Mammary epithelial cell (primary cell): ENCODE measurements at regions of chrX and their contacts with region 1.

Region 1: DNA sequence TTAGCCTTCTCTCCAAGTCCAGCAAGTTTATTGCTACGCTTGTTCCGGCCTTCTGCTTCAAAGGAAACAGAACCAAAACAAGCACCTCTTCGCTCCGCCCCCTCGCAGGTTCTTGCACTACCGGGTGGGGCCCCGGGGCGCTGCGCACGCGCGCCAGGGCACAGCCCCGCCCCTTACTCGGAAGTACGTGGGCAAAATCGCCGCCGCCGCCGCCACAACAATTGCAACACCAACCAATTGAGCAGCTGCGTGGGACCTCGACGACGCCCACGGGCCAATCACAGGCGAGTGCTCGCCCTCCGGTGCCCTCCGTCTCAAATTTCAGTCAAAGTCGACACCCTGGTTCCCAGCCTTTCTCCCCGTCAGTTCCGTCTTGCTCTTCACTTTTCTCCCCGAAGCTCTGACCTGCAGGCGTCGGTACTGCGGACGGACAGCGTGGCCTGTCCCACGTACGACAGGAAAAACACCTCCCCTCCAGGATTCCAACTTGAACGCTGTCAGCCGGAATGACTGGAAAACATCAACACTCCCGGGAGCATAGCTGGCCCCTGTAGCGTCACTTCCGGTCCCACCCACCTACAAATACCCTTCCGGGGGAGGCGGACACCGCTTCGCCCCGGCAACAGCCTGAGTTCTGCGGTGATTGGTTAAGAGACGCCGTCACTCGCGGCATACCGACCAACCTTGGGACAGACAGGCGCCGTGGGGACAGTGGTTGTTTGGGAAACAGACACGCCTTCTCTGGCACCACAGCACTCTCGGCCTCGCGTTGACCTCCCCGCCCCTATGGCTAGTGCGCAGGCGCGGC is 624 bp upstream of the OTUD5 start:
- DNase-seq: peak; percentile 95
- H3K4me3 ChIP-seq: peak overlapping the region; percentile 67 to 75 (median 74)
- H3K27ac ChIP-seq: peak overlapping the region; percentile 97
- H3K4me1 ChIP-seq: no peaks in the 10 kb centered on the region
- H3K27me3 ChIP-seq: no peaks in the 10 kb centered on the region
- CTCF ChIP-seq: no peak

Region 2: DNA sequence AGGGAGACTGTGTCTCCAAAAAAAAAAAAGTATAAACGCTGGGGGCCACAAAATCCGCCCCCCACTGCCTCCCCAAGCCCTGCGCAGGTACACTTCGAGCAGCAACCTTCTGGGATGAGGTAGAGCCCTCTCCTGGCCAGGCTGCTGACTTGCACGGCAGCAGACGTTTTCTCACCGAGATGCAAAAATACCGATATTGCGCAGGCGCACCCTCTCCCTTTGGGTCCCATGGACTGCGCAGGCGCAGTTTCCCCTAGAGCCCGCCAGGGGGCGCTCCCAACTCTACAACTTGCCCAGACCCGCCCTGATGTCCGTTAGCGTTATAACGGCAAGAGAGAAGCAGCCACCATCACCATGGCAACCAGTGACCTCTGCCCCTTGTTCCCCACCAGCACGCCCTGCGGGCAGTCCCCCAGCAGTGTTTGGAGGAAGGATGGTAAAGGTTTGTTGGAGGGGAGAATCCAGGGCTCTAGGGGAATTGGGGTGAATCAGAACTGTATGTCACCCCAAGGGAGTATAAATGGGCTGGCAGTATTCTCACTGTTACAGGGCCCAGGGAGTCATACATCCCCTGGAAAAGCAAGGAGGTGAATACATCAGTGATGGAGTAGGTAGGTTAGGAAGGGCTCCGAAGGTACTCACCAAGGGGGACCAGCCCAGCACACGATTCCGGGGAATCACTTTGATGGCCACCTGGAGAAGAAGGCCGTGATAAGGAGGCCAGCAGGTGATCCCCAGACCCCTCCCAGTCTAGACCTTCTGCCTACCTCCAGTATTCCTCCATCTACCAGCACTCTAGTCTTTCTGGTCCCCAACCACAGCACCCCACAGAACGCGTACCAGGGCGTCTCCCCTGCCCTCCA is 40.7 kb before region 1 on chrX:
- CTCF ChIA-PET with region 1: no interaction called
- dilution Hi-C with region 1: no loop called
- in situ Hi-C with region 1: no loop called
- intact Hi-C with region 1: loop called (anchors 5 kb)
- DNase-seq: peak; percentile 82
- H3K4me3 ChIP-seq: peak overlapping the region; percentile 8 to 70 (median 66)
- H3K27ac ChIP-seq: peak overlapping the region; percentile 56
- H3K4me1 ChIP-seq: peaks cover 5% of the 10 kb centered on the region
- H3K27me3 ChIP-seq: no peaks in the 10 kb centered on the region
- CTCF ChIP-seq: peak; percentile 88 to 89

Region 3: GRCh38 chrX:49002091-49002935 is 44.3 kb after region 1 on chrX and contains the start of gene GRIPAP1:
- CTCF ChIA-PET with region 1: no interaction called
- dilution Hi-C with region 1: no loop called
- in situ Hi-C with region 1: no loop called
- intact Hi-C with region 1: loop called (anchors 2 kb)
- DNase-seq: peak; percentile 79
- H3K4me3 ChIP-seq: peak within 1 kb of the TSS; percentile 63 to 73 (median 70)
- H3K27ac ChIP-seq: peak within 1 kb of the TSS; percentile 93
- H3K4me1 ChIP-seq: no peaks in the 10 kb centered on the region
- H3K27me3 ChIP-seq: no peaks in the 10 kb centered on the region
- CTCF ChIP-seq: no peak
- total RNA-seq, gene GRIPAP1: 16.5 to 42.7 TPM

Region 4: DNA sequence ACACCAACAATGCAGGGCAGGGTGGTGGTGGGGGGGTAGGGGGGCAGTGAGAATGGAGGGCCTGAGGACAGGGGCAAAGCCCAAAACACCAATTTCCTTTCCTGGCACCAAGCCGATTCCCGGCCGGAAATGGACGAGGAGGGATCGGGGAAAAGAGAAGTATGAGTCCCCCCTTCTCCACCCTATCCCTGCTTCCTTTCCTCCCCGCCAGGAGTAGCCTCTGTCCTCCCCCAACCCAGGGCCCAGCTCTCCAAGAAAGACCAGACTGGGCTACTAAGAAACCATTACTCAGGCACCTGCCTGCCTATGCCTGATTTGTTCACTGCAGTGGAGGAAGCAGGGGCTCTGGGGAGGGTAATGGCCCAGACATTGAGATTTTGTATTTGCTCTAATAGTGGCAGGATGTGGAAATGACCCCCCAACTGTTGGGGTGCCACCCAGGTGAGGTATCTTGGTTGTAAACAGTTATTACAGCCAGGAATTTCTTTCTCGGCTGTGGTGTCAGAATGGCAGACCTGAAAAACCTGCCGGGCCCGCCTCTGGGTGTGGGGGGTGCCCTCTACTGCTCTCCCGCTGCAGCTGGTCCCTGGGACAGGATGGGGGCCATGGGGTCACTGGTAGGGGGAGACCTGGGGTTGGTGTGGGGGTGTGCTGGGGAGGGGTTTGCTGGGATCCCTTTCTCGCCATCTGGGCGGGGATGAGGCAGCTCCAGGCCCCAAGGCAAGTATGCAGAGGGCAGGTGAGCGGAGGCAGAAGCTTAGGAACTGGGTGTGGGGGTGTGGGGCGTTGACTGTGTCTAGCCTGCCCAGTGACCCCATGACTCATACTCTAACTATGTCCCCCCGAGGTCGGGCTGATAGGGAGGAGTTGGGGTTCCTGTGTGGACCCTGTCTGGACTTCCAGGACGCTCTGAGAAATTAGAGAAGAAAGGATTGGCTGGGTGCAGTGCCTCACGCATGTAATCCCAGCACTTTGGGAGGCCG is 101.5 kb after region 1 on chrX:
- CTCF ChIA-PET with region 1: no interaction called
- dilution Hi-C with region 1: loop called (anchors 10 kb)
- in situ Hi-C with region 1: no loop called
- intact Hi-C with region 1: no loop called
- DNase-seq: no peak
- H3K4me3 ChIP-seq: peak overlapping the region; percentile 65 to 70 (median 67)
- H3K27ac ChIP-seq: peak overlapping the region; percentile 70
- H3K4me1 ChIP-seq: no peaks in the 10 kb centered on the region
- H3K27me3 ChIP-seq: no peaks in the 10 kb centered on the region
- CTCF ChIP-seq: no peak

Region 5: DNA sequence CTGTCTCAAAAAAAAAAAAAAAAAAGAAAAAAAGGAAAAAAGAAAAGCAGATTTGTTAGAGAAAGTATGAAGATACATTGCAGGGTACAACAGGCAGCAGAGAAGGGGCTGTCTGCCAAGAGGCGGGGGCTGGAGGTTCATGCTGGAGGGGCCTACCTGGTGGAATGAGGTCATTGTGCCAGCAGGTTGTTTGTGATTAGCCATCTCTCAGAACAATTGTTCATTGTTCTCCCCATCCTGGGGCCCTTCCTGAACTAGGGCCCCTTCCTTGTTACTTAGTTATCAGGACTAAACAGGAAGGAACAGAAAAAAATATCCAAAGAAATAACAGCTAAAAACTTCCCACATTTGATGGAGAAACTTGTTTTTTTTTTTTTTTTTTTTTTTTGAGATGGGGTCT is 179.5 kb after region 1 on chrX:
- CTCF ChIA-PET with region 1: no interaction called
- dilution Hi-C with region 1: no loop called
- in situ Hi-C with region 1: no loop called
- intact Hi-C with region 1: no loop called
- DNase-seq: no peak
- H3K4me3 ChIP-seq: no peak overlapping the region
- H3K27ac ChIP-seq: no peak overlapping the region
- H3K4me1 ChIP-seq: no peaks in the 10 kb centered on the region
- H3K27me3 ChIP-seq: no peaks in the 10 kb centered on the region
- CTCF ChIP-seq: no peak